ENCODE measurements at regions of chr6 and their contacts with region 1.

Region 1: GRCh38 chr6:41200296-41200900 is 551 bp downstream of the TREML2 start:
- DNase-seq: peak; percentile 78
- ATAC-seq: peak; percentile 56
- H3K4me3 Mint-ChIP-seq: peak overlapping the region; percentile 71
- H3K27ac Mint-ChIP-seq: peak overlapping the region; percentile 93
- H3K4me1 Mint-ChIP-seq: peaks cover 55% of the 10 kb centered on the region
- H3K27me3 Mint-ChIP-seq: no peaks in the 10 kb centered on the region

Region 2: DNA sequence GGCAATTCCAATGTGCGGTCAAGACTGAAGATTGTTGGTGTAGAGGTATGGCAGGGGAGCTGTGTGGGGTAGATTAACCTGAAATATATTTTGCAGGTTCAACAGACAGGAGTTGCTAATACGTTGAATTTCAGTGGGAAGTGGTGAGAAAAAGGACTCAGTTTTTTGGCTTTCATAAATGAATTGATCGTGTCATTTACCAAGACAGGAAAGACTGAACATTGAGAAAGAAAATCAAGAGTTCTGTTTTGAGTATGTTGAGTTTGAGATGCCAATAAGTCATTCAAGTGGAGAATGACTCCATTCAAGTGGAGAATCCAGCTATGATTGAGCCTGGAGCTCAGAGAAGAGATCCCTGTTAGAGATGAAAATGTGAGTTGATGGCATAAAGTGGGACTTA is 96.6 kb before region 1 on chr6:
- CTCF ChIA-PET with region 1: no interaction called
- POLR2A ChIA-PET with region 1: interaction called, 4 read pairs
- intact Hi-C with region 1: loop called (anchors 1 kb)
- DNase-seq: no peak
- ATAC-seq: peak; percentile 89
- H3K4me3 Mint-ChIP-seq: no peak overlapping the region
- H3K27ac Mint-ChIP-seq: no peak overlapping the region
- H3K4me1 Mint-ChIP-seq: no peaks in the 10 kb centered on the region
- H3K27me3 Mint-ChIP-seq: no peaks in the 10 kb centered on the region

Region 3: DNA sequence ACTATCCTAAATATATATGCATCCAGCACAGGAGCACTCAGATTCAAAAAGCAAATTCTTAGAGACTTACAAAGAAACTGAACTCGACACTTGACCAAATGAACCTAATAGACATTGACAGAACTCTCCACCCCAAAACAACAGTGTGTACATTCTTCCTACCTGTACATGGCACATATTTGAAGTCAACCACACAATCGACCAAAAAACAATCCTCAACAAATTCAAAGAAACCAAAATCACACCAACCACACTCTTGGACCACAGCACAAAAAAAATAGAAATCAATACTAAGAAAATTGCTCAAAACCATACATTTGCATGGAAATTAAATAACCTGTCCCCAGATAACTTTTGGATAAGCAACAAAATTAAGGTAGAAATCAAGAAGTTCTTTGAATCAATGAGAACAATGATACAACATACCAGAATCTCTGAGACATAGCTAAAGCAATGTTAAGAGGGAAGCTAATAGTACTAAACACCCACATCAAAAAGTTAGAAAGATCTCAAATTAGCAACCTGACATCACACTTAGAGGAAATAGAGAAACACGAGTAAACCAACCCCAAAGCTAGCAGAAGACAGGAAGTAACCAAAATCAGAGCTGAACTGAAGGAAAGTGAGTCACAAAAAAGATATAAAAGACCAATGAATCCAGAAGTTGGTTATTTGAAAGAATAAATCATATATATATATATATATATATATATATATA is 98.5 kb after region 1 on chr6:
- CTCF ChIA-PET with region 1: no interaction called
- POLR2A ChIA-PET with region 1: no interaction called
- intact Hi-C with region 1: loop called in 1 of 2 experiments (anchors 2 kb)
- DNase-seq: no peak
- ATAC-seq: peak; percentile 83
- H3K4me3 Mint-ChIP-seq: peak overlapping the region; percentile 24
- H3K27ac Mint-ChIP-seq: peak overlapping the region; percentile 84
- H3K4me1 Mint-ChIP-seq: peaks cover 57% of the 10 kb centered on the region
- H3K27me3 Mint-ChIP-seq: peaks cover 3% of the 10 kb centered on the region

Region 4: DNA sequence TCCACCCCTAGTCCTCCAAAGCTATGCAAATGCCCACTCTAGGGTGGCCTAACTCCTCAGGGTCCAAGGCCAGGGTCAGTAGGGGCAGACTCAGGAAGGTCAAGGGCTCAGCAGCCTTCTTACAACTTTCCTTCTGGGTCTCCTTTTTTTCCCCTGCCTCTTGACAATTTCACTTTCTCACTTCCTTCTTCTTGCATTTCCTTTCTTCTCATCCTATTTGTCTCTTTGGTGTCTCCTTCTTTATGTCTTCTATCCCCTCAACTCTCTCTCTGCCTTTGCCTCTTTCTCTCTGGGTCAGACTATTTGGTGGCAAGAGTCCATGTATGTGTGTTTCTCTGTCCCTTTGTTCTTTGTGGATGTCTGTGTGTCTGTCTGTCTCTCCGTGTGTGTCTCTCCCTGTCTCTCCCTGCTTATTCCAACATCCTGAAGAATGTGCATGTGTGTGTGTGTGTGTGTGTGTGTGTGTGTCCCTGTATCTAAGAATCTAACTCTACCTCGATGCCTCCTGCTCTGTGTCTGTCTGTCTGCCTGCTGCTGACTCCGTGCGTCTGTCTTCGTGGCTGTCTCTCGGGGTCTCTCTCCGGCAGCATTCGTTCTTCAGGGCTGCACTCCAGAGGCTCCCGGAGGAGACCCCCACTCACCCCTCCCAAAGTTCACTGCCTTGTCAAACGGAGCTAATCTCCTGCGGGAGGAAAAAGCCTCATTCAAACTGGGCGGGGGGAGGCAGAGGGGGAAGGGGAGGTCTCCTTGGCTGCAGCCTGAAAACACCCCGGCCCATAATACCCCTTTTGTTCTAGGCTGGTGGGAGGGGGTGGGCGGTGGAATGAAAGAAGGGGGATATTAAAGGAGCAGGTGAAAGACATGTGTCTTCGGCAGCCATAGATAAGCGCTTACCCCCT is 294.1 kb after region 1 on chr6:
- CTCF ChIA-PET with region 1: no interaction called
- POLR2A ChIA-PET with region 1: no interaction called
- intact Hi-C with region 1: no loop called
- DNase-seq: no peak
- ATAC-seq: no peak
- H3K4me3 Mint-ChIP-seq: no peak overlapping the region
- H3K27ac Mint-ChIP-seq: no peak overlapping the region
- H3K4me1 Mint-ChIP-seq: no peaks in the 10 kb centered on the region
- H3K27me3 Mint-ChIP-seq: peaks cover 18% of the 10 kb centered on the region

Measured in activated CD4-positive, alpha-beta T cell treated with anti-CD3 and anti-CD28 coated beads for 36 hours (primary cell).